ENCODE measurements at regions of chr11 and their contacts with region 1.

Region 1: DNA sequence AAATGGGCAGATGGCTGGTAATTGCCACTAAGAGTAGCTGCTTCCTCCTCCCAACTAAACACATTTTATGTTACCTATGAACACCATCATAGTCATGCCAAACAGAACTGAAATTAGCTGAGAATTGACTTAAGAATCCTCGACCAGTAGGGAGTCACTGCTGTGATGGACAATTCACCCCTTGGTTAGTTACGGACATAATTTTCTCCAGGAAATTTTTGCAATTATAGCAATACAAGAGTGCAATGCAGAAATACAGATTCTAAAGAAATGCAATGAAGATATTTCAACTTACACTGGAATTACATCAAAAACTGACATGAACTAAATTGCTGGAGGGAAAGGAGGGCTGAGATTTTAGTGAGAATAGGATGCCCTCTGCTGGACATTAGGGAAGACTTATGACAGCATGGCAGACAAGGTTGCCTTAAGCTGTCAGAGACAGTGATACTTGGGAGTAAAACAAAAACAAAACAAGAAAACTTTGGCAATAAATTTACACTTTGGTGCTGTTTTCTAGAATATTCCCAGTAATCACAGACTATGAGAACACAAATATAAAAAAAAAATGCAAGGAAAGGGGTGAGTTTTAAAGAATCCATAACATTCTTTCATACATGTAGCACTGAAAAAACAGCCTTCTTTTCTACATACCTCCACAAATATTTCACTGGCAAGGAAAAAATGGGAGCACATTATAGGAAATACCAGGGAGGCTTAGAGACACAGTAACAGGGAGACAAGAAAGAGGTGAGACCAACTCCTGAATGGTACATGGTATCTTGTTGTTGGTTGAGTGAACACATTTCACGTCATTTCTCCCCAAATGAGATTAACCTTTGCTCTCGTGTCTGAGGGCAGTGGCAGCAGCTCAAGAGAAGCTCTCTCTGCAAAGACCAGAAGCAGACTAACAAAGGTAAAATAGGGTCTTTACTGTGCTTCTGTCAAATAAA is 11.2 kb upstream of the PPP2R1B start:
- DNase-seq: peak; percentile 35
- H3K4me3 Mint-ChIP-seq: no peak overlapping the region
- H3K27ac Mint-ChIP-seq: no peak overlapping the region
- H3K4me1 Mint-ChIP-seq: no peaks in the 10 kb centered on the region
- H3K27me3 Mint-ChIP-seq: no peaks in the 10 kb centered on the region

Region 2: DNA sequence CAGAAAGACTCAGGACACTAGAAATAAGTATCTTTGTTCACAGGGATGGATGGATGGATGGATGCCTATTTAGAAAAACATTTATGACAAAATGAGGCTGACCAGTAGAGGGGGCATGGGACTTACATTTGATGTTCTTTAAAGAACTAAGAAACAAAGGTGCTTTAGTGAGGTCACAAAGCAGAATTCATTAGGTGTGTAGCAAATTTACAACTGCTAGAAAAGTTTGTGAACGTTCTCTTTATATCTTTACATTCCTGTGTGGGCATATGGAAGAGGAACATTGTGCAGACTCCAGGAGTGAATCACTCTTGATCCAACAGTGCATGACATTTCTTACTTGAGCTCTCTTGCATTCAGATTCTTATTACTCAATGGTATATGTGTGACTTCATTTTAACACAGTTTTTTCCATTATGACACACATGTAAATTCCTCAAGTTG is 191.0 kb before region 1 on chr11:
- CTCF ChIA-PET with region 1: interaction called, 43 read pairs
- intact Hi-C with region 1: loop called (anchors 1 kb)
- DNase-seq: peak; percentile 69
- H3K4me3 Mint-ChIP-seq: no peak overlapping the region
- H3K27ac Mint-ChIP-seq: no peak overlapping the region
- H3K4me1 Mint-ChIP-seq: no peaks in the 10 kb centered on the region
- H3K27me3 Mint-ChIP-seq: peaks cover 2% of the 10 kb centered on the region

Region 3: GRCh38 chr11:111792955-111793500 is 15.7 kb after region 1 on chr11:
- CTCF ChIA-PET with region 1: interaction called, 10 read pairs
- intact Hi-C with region 1: no loop called
- DNase-seq: no peak
- H3K4me3 Mint-ChIP-seq: no peak overlapping the region
- H3K27ac Mint-ChIP-seq: no peak overlapping the region
- H3K4me1 Mint-ChIP-seq: peaks cover 5% of the 10 kb centered on the region
- H3K27me3 Mint-ChIP-seq: no peaks in the 10 kb centered on the region

Region 4: GRCh38 chr11:111841370-111842053 is 64.1 kb after region 1 on chr11:
- CTCF ChIA-PET with region 1: interaction called, 12 read pairs
- intact Hi-C with region 1: loop called (anchors 1 kb)
- DNase-seq: peak; percentile 96
- H3K4me3 Mint-ChIP-seq: no peak overlapping the region
- H3K27ac Mint-ChIP-seq: no peak overlapping the region
- H3K4me1 Mint-ChIP-seq: no peaks in the 10 kb centered on the region
- H3K27me3 Mint-ChIP-seq: no peaks in the 10 kb centered on the region

Measured in activated naive CD4-positive, alpha-beta T cell treated with anti-CD3 and anti-CD28 coated beads for 36 hours (primary cell).